ENCODE measurements at regions of chr9 and their contacts with region 1.

Region 1: GRCh38 chr9:114587385-114588202 is at the start of gene ATP6V1G1:
- DNase-seq: peak; percentile 93 to 99 (median 97)
- ATAC-seq: peak; percentile 97
- H3K4me3 ChIP-seq: peak within 1 kb of the TSS; percentile 94
- H3K4me3 Mint-ChIP-seq: peak within 1 kb of the TSS; percentile 95 to 99 (median 98)
- H3K27ac ChIP-seq: peak within 1 kb of the TSS; percentile 99
- H3K27ac Mint-ChIP-seq: peak within 1 kb of the TSS; percentile 91 to 100 (median 99)
- H3K4me1 ChIP-seq: peaks cover 33 to 35% of the 10 kb centered on the region in 2 donors
- H3K4me1 Mint-ChIP-seq: peaks cover 43 to 53% (median 49%) of the 10 kb centered on the region in 7 donors
- H3K27me3 ChIP-seq: no peaks in the 10 kb centered on the region
- H3K27me3 Mint-ChIP-seq: peaks cover 0 to 6% (median 0%) of the 10 kb centered on the region in 5 donors
- total RNA-seq, gene ATP6V1G1: 86.2 to 136 (median 130) TPM

Region 2: GRCh38 chr9:114304416-114305188 is 283.0 kb before region 1 on chr9:
- CTCF ChIA-PET with region 1: no interaction called
- POLR2A ChIA-PET with region 1: no interaction called
- intact Hi-C with region 1: no loop called
- DNase-seq: peak in 1 of 9 donors; percentile 17
- ATAC-seq: no peak
- H3K4me3 ChIP-seq: no peak overlapping the region
- H3K4me3 Mint-ChIP-seq: no peak overlapping the region
- H3K27ac ChIP-seq: no peak overlapping the region
- H3K27ac Mint-ChIP-seq: no peak overlapping the region
- H3K4me1 ChIP-seq: no peaks in the 10 kb centered on the region
- H3K4me1 Mint-ChIP-seq: peaks cover 0 to 16% (median 4%) of the 10 kb centered on the region in 7 donors
- H3K27me3 ChIP-seq: no peaks in the 10 kb centered on the region
- H3K27me3 Mint-ChIP-seq: no peaks in the 10 kb centered on the region

Region 3: GRCh38 chr9:114397848-114398605 is 189.6 kb before region 1 on chr9:
- CTCF ChIA-PET with region 1: interaction called, 7 read pairs
- POLR2A ChIA-PET with region 1: interaction called, 13 read pairs
- intact Hi-C with region 1: loop called (anchors 1 kb)
- DNase-seq: peak; percentile 91 to 96 (median 94)
- ATAC-seq: peak; percentile 94
- H3K4me3 ChIP-seq: peak overlapping the region; percentile 98
- H3K4me3 Mint-ChIP-seq: peak overlapping the region; percentile 86 to 99 (median 96)
- H3K27ac ChIP-seq: peak overlapping the region; percentile 97
- H3K27ac Mint-ChIP-seq: peak overlapping the region; percentile 88 to 99 (median 97)
- H3K4me1 ChIP-seq: peaks cover 26 to 44% of the 10 kb centered on the region in 2 donors
- H3K4me1 Mint-ChIP-seq: peaks cover 40 to 48% (median 46%) of the 10 kb centered on the region in 7 donors
- H3K27me3 ChIP-seq: no peaks in the 10 kb centered on the region
- H3K27me3 Mint-ChIP-seq: no peaks in the 10 kb centered on the region

Region 4: DNA sequence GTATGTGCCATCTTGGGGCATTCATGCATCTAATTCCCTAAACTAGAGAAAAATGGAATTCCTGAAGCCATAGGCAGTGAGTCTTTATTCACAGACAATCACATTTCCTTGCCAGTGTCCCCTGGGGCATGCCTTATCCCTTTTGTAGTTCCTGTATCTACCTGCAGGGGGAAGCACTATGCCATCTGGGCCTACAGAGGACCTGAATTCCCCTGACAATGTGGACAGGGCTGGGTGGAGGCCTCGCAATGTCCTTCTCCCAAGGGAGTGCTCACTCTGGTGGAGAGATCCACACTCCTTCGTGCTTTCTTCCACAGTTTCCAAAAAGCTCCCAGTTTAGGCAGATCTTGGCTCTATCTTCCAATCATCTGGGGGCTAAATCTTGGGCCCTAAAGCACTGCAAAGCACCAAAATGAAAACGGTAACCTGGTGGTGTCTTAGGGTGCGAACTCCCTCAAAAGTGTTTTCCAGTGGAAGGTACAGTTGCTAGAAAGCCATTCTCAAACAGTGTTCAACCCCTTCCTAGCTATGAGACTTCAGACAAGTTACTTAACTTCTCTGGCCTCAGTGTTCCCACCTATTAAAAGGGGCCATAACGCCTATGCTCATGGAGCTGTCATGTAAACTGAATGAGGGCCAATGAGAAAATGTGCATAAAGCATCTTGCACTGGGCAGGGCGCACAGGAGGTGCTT is 99.8 kb before region 1 on chr9:
- CTCF ChIA-PET with region 1: interaction called, 9 read pairs
- POLR2A ChIA-PET with region 1: no interaction called
- intact Hi-C with region 1: loop called (anchors 1 to 5 kb)
- DNase-seq: peak; percentile 25 to 80 (median 62)
- ATAC-seq: peak; percentile 92
- H3K4me3 ChIP-seq: no peak overlapping the region
- H3K4me3 Mint-ChIP-seq: no peak overlapping the region
- H3K27ac ChIP-seq: no peak overlapping the region
- H3K27ac Mint-ChIP-seq: peak overlapping the region in 2 of 9 donors; percentile 8 to 57
- H3K4me1 ChIP-seq: peaks cover 0 to 9% of the 10 kb centered on the region in 2 donors
- H3K4me1 Mint-ChIP-seq: peaks cover 0 to 30% (median 0%) of the 10 kb centered on the region in 7 donors
- H3K27me3 ChIP-seq: no peaks in the 10 kb centered on the region
- H3K27me3 Mint-ChIP-seq: peaks cover 0 to 4% (median 0%) of the 10 kb centered on the region in 5 donors

Region 5: DNA sequence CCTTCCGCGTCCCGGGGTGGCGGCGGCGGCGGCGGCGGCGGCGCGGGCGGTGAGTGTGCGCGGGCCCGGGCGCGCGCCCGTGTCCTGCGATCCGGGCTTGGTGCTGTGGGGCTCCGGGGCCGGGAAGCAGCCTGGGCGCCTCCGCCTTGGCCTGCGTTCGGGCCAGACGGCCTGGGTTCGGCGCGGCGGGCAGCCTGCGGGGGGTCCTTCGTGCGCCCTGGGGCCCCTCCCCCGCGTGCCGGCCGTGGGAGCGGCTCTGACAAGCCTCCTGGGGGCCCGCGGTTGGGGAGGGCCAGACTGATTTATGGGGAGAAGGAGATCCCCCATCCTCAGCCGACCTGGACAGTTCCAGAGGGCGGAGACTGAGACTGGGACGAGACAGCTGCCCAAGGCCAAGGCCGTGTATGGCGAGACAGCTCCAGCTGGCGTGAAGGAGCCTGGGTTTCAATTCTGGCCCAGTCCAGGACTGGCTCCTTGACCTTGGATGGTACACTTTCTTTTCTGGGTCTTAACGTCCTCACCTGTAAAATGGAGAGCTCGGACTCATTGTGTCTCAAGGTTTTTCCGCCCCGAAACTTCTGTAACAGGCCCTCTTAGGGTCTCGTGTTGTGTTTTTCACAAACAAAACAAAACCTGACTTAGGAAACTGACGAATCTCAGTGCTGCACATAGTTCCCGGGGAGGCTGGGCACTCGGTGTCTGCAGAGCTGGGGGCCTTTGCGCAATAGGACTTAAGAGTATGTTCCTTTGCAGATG is 24.1 kb after region 1 on chr9:
- CTCF ChIA-PET with region 1: interaction called, 12 read pairs
- POLR2A ChIA-PET with region 1: interaction called, 329 read pairs
- intact Hi-C with region 1: loop called (anchors 1 kb)
- DNase-seq: peak in 5 of 9 donors; percentile 24 to 44 (median 31)
- ATAC-seq: peak; percentile 82
- H3K4me3 ChIP-seq: peak overlapping the region; percentile 85
- H3K4me3 Mint-ChIP-seq: peak overlapping the region; percentile 90 to 99 (median 92)
- H3K27ac ChIP-seq: peak overlapping the region; percentile 92
- H3K27ac Mint-ChIP-seq: peak overlapping the region; percentile 77 to 98 (median 95)
- H3K4me1 ChIP-seq: peaks cover 14 to 31% of the 10 kb centered on the region in 2 donors
- H3K4me1 Mint-ChIP-seq: peaks cover 34 to 63% (median 55%) of the 10 kb centered on the region in 7 donors
- H3K27me3 ChIP-seq: no peaks in the 10 kb centered on the region
- H3K27me3 Mint-ChIP-seq: no peaks in the 10 kb centered on the region

Region 6: GRCh38 chr9:114653556-114654159 is 66.1 kb after region 1 on chr9:
- CTCF ChIA-PET with region 1: interaction called, 97 read pairs
- POLR2A ChIA-PET with region 1: interaction called, 71 read pairs
- intact Hi-C with region 1: loop called (anchors 1 kb)
- DNase-seq: peak; percentile 56 to 88 (median 81)
- ATAC-seq: peak; percentile 99
- H3K4me3 ChIP-seq: no peak overlapping the region
- H3K4me3 Mint-ChIP-seq: no peak overlapping the region
- H3K27ac ChIP-seq: no peak overlapping the region
- H3K27ac Mint-ChIP-seq: peak overlapping the region in 7 of 9 donors; percentile 16 to 81 (median 56)
- H3K4me1 ChIP-seq: peaks cover 0 to 23% of the 10 kb centered on the region in 2 donors
- H3K4me1 Mint-ChIP-seq: peaks cover 11 to 25% (median 21%) of the 10 kb centered on the region in 7 donors
- H3K27me3 ChIP-seq: no peaks in the 10 kb centered on the region
- H3K27me3 Mint-ChIP-seq: no peaks in the 10 kb centered on the region

Region 7: GRCh38 chr9:114790521-114790920 is 202.9 kb after region 1 on chr9:
- CTCF ChIA-PET with region 1: no interaction called
- POLR2A ChIA-PET with region 1: no interaction called
- intact Hi-C with region 1: no loop called
- DNase-seq: no peak
- ATAC-seq: no peak
- H3K4me3 ChIP-seq: no peak overlapping the region
- H3K4me3 Mint-ChIP-seq: no peak overlapping the region
- H3K27ac ChIP-seq: no peak overlapping the region
- H3K27ac Mint-ChIP-seq: no peak overlapping the region
- H3K4me1 ChIP-seq: no peaks in the 10 kb centered on the region
- H3K4me1 Mint-ChIP-seq: peaks cover 0 to 10% (median 0%) of the 10 kb centered on the region in 7 donors
- H3K27me3 ChIP-seq: no peaks in the 10 kb centered on the region
- H3K27me3 Mint-ChIP-seq: peaks cover 0 to 19% (median 0%) of the 10 kb centered on the region in 5 donors

Region 8: GRCh38 chr9:114945616-114946412 is 358.2 kb after region 1 on chr9:
- CTCF ChIA-PET with region 1: no interaction called
- POLR2A ChIA-PET with region 1: no interaction called
- intact Hi-C with region 1: no loop called
- DNase-seq: no peak
- ATAC-seq: no peak
- H3K4me3 ChIP-seq: no peak overlapping the region
- H3K4me3 Mint-ChIP-seq: no peak overlapping the region
- H3K27ac ChIP-seq: no peak overlapping the region
- H3K27ac Mint-ChIP-seq: no peak overlapping the region
- H3K4me1 ChIP-seq: no peaks in the 10 kb centered on the region
- H3K4me1 Mint-ChIP-seq: peaks cover 5 to 23% (median 15%) of the 10 kb centered on the region in 7 donors
- H3K27me3 ChIP-seq: no peaks in the 10 kb centered on the region
- H3K27me3 Mint-ChIP-seq: peaks cover 0 to 3% (median 0%) of the 10 kb centered on the region in 5 donors

Region 9: DNA sequence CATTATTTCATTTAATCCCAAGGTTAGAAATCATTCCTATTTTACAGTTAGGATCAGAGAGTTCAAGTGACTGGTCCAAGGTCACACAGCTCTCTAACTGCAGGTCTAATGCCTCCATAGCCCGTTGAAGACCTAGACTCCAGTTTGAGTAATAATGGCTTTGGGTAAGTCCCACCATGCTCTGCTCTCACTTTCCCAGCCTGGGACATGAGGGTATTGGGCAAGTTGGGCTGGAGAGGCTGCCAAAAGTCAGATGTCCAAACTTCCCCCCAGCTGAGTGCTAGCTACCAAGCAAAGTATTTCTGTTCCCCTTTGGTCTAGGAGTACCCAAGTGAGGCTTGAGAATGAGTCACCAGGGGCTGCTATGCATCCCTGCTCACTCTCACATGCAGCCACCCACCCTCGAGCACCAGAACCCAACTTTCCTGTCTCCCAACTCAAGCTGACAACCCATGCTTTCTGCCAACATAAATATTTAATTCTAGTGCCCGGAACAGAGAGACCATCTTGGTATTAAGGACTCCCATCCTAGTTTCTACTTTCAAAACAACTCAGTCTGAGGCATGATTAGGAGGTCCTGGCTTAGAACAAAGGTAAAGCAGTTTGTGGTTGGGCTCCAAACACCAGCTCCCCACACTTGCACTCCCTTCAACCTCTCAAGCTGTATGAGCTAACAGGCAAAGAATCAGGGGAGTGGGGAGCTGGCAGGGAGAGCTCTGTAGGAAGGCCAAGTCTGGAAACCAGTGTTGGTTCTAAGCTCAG is 1863.0 kb after region 1 on chr9:
- CTCF ChIA-PET with region 1: no interaction called
- POLR2A ChIA-PET with region 1: no interaction called
- intact Hi-C with region 1: no loop called
- DNase-seq: no peak
- ATAC-seq: peak; percentile 20
- H3K4me3 ChIP-seq: no peak overlapping the region
- H3K4me3 Mint-ChIP-seq: no peak overlapping the region
- H3K27ac ChIP-seq: no peak overlapping the region
- H3K27ac Mint-ChIP-seq: peak overlapping the region in 1 of 9 donors; percentile 36
- H3K4me1 ChIP-seq: no peaks in the 10 kb centered on the region
- H3K4me1 Mint-ChIP-seq: no peaks in the 10 kb centered on the region
- H3K27me3 ChIP-seq: no peaks in the 10 kb centered on the region
- H3K27me3 Mint-ChIP-seq: no peaks in the 10 kb centered on the region